A673 (cell line): ENCODE measurements at regions of chr12 and their contacts with region 1.

Region 1: GRCh38 chr12:8949342-8950220 is at the start of gene M6PR:
- DNase-seq: peak; percentile 97
- H3K4me3 ChIP-seq: peak within 1 kb of the TSS; percentile 80
- H3K27ac ChIP-seq: peak within 1 kb of the TSS; percentile 96
- H3K4me1 ChIP-seq: peaks cover 16% of the 10 kb centered on the region
- H3K27me3 ChIP-seq: no peaks in the 10 kb centered on the region
- CTCF ChIP-seq: peak; percentile 62
- total RNA-seq, gene M6PR: 138 and 160 TPM in 2 replicates

Region 2: GRCh38 chr12:8876887-8877286 is 72.7 kb before region 1 on chr12:
- CTCF ChIA-PET with region 1: no interaction called
- POLR2A ChIA-PET with region 1: no interaction called
- intact Hi-C with region 1: no loop called
- DNase-seq: no peak
- H3K4me3 ChIP-seq: no peak overlapping the region
- H3K27ac ChIP-seq: no peak overlapping the region
- H3K4me1 ChIP-seq: no peaks in the 10 kb centered on the region
- H3K27me3 ChIP-seq: no peaks in the 10 kb centered on the region
- CTCF ChIP-seq: no peak

Region 3: DNA sequence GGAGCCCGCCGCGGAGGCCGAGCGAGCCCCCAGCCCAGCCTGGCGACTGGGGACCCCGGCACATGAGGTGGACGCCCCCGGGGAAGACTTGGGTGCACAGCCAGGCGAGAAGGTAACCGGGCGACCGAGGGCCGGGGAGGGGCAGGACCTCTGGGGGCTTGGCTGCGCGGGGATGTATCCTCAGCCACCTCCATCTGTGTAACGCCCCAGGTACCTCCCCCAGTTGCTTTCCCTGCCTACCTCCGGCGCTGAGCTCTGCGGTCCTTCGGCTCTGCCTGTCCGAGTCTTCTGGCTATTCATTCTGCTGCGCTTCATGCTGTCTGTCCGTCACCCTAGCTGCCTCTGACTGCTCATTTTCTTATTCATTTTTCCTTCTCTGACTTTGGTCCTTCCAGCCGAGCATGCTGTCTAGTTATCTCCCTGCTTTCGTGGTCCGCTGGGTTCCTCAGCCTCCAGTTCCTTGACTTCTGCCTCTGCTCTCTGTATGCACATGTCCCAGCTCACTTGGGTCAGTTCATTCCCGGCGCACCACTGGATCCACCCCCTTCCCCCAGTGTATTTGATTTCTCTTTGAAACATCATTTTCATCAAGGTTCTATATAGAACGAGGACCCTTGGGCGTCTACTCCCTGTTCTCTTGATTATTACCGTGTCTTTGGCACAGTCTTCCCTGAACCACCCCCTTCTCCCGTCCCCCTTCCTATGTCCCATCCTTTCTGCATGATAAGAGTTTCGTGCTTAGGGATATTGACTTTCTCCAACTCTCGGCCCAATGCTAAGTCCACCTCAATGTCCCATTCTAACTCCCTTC is 34.7 kb before region 1 on chr12:
- CTCF ChIA-PET with region 1: interaction called, 3 read pairs
- POLR2A ChIA-PET with region 1: no interaction called
- intact Hi-C with region 1: loop called (anchors 5 kb)
- DNase-seq: peak; percentile 34
- H3K4me3 ChIP-seq: peak overlapping the region; percentile 68
- H3K27ac ChIP-seq: no peak overlapping the region
- H3K4me1 ChIP-seq: peaks cover 9% of the 10 kb centered on the region
- H3K27me3 ChIP-seq: no peaks in the 10 kb centered on the region
- CTCF ChIP-seq: no peak

Region 4: GRCh38 chr12:9039397-9039977 is 89.9 kb after region 1 on chr12:
- CTCF ChIA-PET with region 1: no interaction called
- POLR2A ChIA-PET with region 1: no interaction called
- intact Hi-C with region 1: loop called (anchors 1 kb)
- DNase-seq: peak; percentile 69
- H3K4me3 ChIP-seq: no peak overlapping the region
- H3K27ac ChIP-seq: no peak overlapping the region
- H3K4me1 ChIP-seq: no peaks in the 10 kb centered on the region
- H3K27me3 ChIP-seq: no peaks in the 10 kb centered on the region
- CTCF ChIP-seq: peak; percentile 80